ENCODE measurements at regions of chr9 and their contacts with region 1.

Region 1: DNA sequence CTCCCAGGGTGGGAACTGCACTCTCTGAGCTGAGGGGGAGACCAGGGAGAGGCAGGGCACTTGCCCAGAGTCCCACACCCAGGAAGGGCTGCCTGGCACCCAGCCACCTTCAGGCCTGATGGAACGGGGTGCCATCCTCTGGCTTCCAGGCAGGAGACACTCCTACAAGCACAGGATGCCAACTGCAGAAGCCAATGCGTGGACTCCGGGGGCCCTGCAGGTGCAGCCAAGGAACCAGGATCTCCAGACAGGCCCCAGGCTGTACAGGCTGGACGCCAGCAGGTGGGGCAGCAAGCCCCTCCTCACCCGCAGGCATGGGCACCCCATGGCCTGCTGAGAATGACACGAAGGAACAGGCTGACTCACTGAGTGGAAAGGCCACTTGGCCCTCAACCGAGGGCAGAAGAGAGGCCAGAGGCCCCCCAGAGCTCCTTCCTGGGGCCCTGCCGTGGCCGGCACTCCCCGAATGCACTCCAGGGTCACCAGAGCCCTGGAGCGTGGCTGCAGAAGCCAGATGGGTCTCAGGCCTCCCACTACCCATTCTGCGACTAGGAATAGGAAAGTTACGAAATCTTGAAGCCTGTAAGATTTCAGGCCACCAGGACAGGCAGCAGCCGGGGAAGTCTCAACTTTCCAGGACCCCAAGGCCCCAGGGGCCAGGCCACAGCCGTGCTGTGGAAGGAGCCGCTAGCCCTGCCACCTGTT is 15.7 kb downstream of the NACC2 start:
- DNase-seq: peak in 2 of 7 donors; percentile 58 to 64
- H3K4me3 ChIP-seq: no peak overlapping the region
- H3K27ac ChIP-seq: peak overlapping the region in 4 of 5 donors; percentile 2 to 77 (median 52)
- H3K4me1 ChIP-seq: peaks cover 12 to 21% of the 10 kb centered on the region in 2 donors
- H3K27me3 ChIP-seq: no peaks in the 10 kb centered on the region
- CTCF ChIP-seq: no peak
- POLR2A ChIP-seq: no peak

Region 2: GRCh38 chr9:136043441-136043991 is 35.8 kb before region 1 on chr9:
- intact Hi-C with region 1: loop called in 1 of 2 experiments (anchors 5 kb)
- DNase-seq: peak in 1 of 7 donors; percentile 35
- H3K4me3 ChIP-seq: no peak overlapping the region
- H3K27ac ChIP-seq: no peak overlapping the region
- H3K4me1 ChIP-seq: no peaks in the 10 kb centered on the region
- H3K27me3 ChIP-seq: no peaks in the 10 kb centered on the region
- CTCF ChIP-seq: no peak
- POLR2A ChIP-seq: no peak